Calu3 (cell line): ENCODE measurements at regions of chr3 and their contacts with region 1.

Region 1: DNA sequence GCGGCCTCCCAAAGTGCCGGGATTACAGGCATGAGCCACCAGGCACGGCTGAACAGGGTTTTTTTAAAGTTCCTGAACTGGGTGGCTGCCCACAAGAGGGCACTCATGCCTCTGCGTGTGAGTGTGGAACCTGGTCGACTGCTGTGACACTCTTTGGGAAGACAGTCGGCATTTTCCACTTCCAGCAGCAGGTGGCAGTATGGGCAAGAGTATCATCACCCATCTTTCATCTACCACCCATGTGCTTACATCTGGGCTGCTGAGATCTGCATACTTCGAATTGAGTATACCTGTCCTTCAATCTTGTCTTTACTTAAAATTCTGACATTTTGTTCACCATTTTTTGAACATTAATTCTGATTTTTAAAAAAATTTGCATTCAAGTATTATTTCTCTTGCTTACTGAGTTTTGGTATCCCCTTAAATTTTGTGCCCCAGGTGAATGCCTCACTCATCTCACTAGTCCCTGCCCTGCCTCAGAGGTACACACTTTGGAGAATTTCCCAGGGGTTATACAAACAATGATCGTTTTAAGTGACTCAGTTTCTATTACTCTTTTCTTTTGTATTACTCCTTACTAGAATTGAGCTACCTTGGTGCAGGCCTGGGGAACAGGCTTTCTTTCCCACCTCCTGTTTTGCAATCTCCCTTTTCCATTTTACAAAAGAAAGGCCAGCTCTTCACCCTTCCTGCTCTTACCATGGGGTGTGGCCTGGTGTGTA is 11.8 kb downstream of the CLEC3B start:
- DNase-seq: peak; percentile 91
- H3K4me3 Mint-ChIP-seq: peak overlapping the region; percentile 50
- H3K27ac Mint-ChIP-seq: no peak overlapping the region
- H3K4me1 Mint-ChIP-seq: peaks cover 10% of the 10 kb centered on the region
- H3K27me3 Mint-ChIP-seq: peaks cover 22% of the 10 kb centered on the region
- CTCF ChIP-seq: peak; percentile 87

Region 2: GRCh38 chr3:45210308-45211041 is 172.6 kb after region 1 on chr3:
- CTCF ChIA-PET with region 1: interaction called, 46 read pairs
- intact Hi-C with region 1: loop called (anchors 1 kb)
- DNase-seq: peak; percentile 88
- H3K4me3 Mint-ChIP-seq: no peak overlapping the region
- H3K27ac Mint-ChIP-seq: no peak overlapping the region
- H3K4me1 Mint-ChIP-seq: peaks cover 8% of the 10 kb centered on the region
- H3K27me3 Mint-ChIP-seq: peaks cover 13% of the 10 kb centered on the region
- CTCF ChIP-seq: peak; percentile 78

Region 3: DNA sequence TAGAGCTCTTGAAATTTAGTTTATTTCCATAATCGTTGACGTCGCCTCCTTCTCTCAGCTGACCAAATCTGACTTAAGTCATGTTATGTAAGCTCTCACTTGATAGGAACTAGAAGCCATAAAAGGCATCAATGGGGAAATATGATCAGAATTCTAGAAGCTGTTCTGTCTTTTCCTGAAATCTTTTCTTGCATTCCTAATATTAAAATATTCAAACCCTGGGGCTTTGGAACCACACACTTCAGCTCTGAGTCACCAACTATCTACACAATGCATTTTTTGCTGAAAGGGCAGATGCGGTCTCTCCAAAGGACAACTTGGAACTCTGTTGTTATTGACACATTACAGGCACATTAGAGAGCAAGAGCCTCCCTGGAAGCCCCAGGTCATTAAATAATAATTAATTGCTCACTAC is 441.7 kb after region 1 on chr3:
- CTCF ChIA-PET with region 1: no interaction called
- intact Hi-C with region 1: loop called (anchors 5 kb)
- DNase-seq: peak; percentile 5
- H3K4me3 Mint-ChIP-seq: no peak overlapping the region
- H3K27ac Mint-ChIP-seq: no peak overlapping the region
- H3K4me1 Mint-ChIP-seq: peaks cover 23% of the 10 kb centered on the region
- H3K27me3 Mint-ChIP-seq: no peaks in the 10 kb centered on the region
- CTCF ChIP-seq: no peak

Region 4: DNA sequence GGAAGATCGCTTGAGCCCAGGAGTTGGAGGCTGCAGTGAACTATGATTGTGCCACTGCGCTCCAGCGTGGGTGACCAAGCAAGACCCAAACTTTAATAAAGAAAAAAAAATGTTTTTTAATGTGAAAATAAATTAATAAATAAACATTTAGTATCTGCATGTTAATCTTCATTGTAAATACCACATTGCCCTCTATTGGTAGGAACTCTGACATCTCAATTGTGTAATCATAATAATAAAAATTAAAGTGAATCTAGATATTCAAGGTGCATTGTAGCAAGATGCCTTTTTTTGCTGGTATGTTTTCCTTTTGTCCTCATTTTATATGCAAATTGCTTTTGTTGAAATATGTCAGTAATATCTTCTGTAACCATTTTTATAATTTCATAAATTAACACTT is 461.6 kb after region 1 on chr3:
- CTCF ChIA-PET with region 1: interaction called, 12 read pairs
- intact Hi-C with region 1: loop called (anchors 2 kb)
- DNase-seq: no peak
- H3K4me3 Mint-ChIP-seq: no peak overlapping the region
- H3K27ac Mint-ChIP-seq: no peak overlapping the region
- H3K4me1 Mint-ChIP-seq: no peaks in the 10 kb centered on the region
- H3K27me3 Mint-ChIP-seq: no peaks in the 10 kb centered on the region
- CTCF ChIP-seq: no peak

Region 5: GRCh38 chr3:45765266-45765851 is 727.5 kb after region 1 on chr3:
- CTCF ChIA-PET with region 1: no interaction called
- intact Hi-C with region 1: no loop called
- DNase-seq: no peak
- H3K4me3 Mint-ChIP-seq: no peak overlapping the region
- H3K27ac Mint-ChIP-seq: no peak overlapping the region
- H3K4me1 Mint-ChIP-seq: no peaks in the 10 kb centered on the region
- H3K27me3 Mint-ChIP-seq: no peaks in the 10 kb centered on the region
- CTCF ChIP-seq: no peak